ENCODE measurements at regions of chr7 and their contacts with region 1.

Region 1: GRCh38 chr7:70480927-70481569 is 650.9 kb upstream of the GALNT17 start:
- DNase-seq: peak; percentile 96
- H3K4me3 ChIP-seq: no peak overlapping the region
- H3K27ac ChIP-seq: no peak overlapping the region
- H3K4me1 ChIP-seq: peaks cover 29% of the 10 kb centered on the region
- H3K27me3 ChIP-seq: no peaks in the 10 kb centered on the region
- CTCF ChIP-seq: no peak

Region 2: GRCh38 chr7:70553364-70553763 is 72.3 kb after region 1 on chr7:
- CTCF ChIA-PET with region 1: no interaction called
- dilution Hi-C with region 1: no loop called
- in situ Hi-C with region 1: no loop called
- intact Hi-C with region 1: no loop called
- DNase-seq: no peak
- H3K4me3 ChIP-seq: no peak overlapping the region
- H3K27ac ChIP-seq: no peak overlapping the region
- H3K4me1 ChIP-seq: no peaks in the 10 kb centered on the region
- H3K27me3 ChIP-seq: no peaks in the 10 kb centered on the region
- CTCF ChIP-seq: no peak

Region 3: GRCh38 chr7:70590126-70590854 is 109.2 kb after region 1 on chr7:
- CTCF ChIA-PET with region 1: no interaction called
- dilution Hi-C with region 1: loop called (anchors 5 kb)
- in situ Hi-C with region 1: no loop called
- intact Hi-C with region 1: no loop called
- DNase-seq: no peak
- H3K4me3 ChIP-seq: no peak overlapping the region
- H3K27ac ChIP-seq: no peak overlapping the region
- H3K4me1 ChIP-seq: peaks cover 1% of the 10 kb centered on the region
- H3K27me3 ChIP-seq: no peaks in the 10 kb centered on the region
- CTCF ChIP-seq: no peak

Measured in mammary epithelial cell (primary cell).